ENCODE measurements at regions of chr2 and their contacts with region 1.

Region 1: DNA sequence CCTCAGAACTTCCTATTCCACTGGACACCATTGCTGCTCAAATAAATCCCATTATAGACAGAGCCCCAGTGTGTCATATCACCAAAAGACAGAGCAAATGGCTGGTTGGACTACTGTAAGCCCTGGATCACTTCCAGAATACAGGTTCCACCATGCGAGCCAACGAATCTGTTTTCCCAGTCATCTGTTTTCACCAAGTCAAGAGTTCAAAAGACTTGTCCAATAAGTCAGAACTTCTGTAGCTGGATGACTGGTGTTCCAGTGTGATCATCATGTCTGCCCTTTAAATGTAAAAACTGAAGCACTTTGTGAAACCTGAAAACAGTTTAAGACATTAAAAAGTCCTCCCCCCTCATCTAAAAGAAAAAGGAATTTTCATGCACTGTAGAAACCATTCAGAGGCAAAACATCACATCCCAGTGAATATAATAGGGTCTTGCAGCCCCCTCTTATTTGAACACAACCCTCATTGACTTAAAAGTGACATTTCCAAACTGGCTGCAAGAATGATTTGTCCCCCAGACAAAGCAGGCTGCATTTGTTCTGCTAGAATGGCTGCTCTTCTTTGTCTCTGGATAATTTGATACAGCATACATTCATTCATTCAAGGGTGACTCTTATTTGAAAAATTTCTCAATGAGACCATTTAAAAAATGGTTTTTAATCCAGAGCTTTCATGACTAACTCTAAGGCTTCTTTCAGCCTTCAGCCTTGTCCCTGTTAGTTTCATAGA is 64.6 kb upstream of the TANC1 start:
- DNase-seq: no peak
- ATAC-seq: no peak
- H3K4me3 ChIP-seq: no peak overlapping the region
- H3K4me3 Mint-ChIP-seq: no peak overlapping the region
- H3K27ac ChIP-seq: no peak overlapping the region
- H3K27ac Mint-ChIP-seq: no peak overlapping the region
- H3K4me1 ChIP-seq: no peaks in the 10 kb centered on the region
- H3K4me1 Mint-ChIP-seq: no peaks in the 10 kb centered on the region
- H3K27me3 ChIP-seq: no peaks in the 10 kb centered on the region
- H3K27me3 Mint-ChIP-seq: no peaks in the 10 kb centered on the region
- CTCF ChIP-seq: no peak

Region 2: GRCh38 chr2:158773121-158773520 is 130.8 kb before region 1 on chr2:
- CTCF ChIA-PET with region 1: no interaction called
- POLR2A ChIA-PET with region 1: no interaction called
- intact Hi-C with region 1: no loop called
- DNase-seq: no peak
- ATAC-seq: no peak
- H3K4me3 ChIP-seq: no peak overlapping the region
- H3K4me3 Mint-ChIP-seq: no peak overlapping the region
- H3K27ac ChIP-seq: no peak overlapping the region
- H3K27ac Mint-ChIP-seq: no peak overlapping the region
- H3K4me1 ChIP-seq: no peaks in the 10 kb centered on the region
- H3K4me1 Mint-ChIP-seq: no peaks in the 10 kb centered on the region
- H3K27me3 ChIP-seq: no peaks in the 10 kb centered on the region
- H3K27me3 Mint-ChIP-seq: no peaks in the 10 kb centered on the region
- CTCF ChIP-seq: no peak

Region 3: GRCh38 chr2:158923180-158923594 is 19.3 kb after region 1 on chr2:
- CTCF ChIA-PET with region 1: no interaction called
- POLR2A ChIA-PET with region 1: no interaction called
- intact Hi-C with region 1: no loop called
- DNase-seq: no peak
- ATAC-seq: no peak
- H3K4me3 ChIP-seq: no peak overlapping the region
- H3K4me3 Mint-ChIP-seq: no peak overlapping the region
- H3K27ac ChIP-seq: no peak overlapping the region
- H3K27ac Mint-ChIP-seq: no peak overlapping the region
- H3K4me1 ChIP-seq: no peaks in the 10 kb centered on the region
- H3K4me1 Mint-ChIP-seq: no peaks in the 10 kb centered on the region
- H3K27me3 ChIP-seq: no peaks in the 10 kb centered on the region
- H3K27me3 Mint-ChIP-seq: peaks cover 6% of the 10 kb centered on the region
- CTCF ChIP-seq: no peak

Region 4: GRCh38 chr2:159118115-159118858 is 214.4 kb after region 1 on chr2:
- CTCF ChIA-PET with region 1: interaction called, 6 read pairs
- POLR2A ChIA-PET with region 1: interaction called, 3 read pairs
- intact Hi-C with region 1: loop called (anchors 1 kb)
- DNase-seq: peak; percentile 61 to 87 (median 72)
- ATAC-seq: peak; percentile 91
- H3K4me3 ChIP-seq: no peak overlapping the region
- H3K4me3 Mint-ChIP-seq: no peak overlapping the region
- H3K27ac ChIP-seq: no peak overlapping the region
- H3K27ac Mint-ChIP-seq: no peak overlapping the region
- H3K4me1 ChIP-seq: peaks cover 8% of the 10 kb centered on the region
- H3K4me1 Mint-ChIP-seq: peaks cover 8% of the 10 kb centered on the region
- H3K27me3 ChIP-seq: peaks cover 0 to 3% of the 10 kb centered on the region in 2 experiments
- H3K27me3 Mint-ChIP-seq: no peaks in the 10 kb centered on the region
- CTCF ChIP-seq: peak; percentile 95

Region 5: DNA sequence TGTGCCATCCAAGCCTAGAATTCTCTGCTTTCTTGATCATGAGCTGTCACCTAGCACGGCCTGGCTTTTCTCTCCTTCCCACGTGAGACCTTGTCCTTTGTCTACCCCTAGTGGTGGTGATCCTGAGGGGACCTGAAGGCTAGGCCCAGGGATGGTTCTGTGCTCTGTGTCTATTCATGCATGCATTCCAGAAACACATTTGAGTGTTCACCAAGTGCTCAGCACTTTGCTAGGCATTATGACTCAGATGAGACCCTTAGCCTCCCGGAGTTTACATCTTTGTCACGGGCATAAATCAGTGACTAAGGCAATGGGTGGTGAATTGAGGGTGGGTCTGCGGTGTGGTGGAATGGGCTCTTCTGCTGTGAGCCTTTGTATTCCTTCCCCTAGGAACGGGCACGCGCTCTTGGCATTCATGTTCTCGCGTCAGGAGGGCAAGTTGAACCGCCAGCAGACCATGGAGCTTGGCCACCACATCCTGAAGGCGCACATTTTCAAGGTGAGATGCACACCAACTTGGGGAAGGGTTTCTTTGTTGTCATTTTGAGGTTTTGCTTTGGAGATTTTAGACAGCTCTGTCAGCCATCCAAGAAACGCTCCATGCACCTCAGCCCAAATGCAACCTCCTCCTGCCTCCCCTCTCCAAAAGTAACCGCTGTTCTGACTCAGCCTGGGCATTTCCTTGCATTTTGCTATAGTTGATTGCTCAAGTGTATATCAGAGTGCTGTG is 281.7 kb after region 1 on chr2:
- CTCF ChIA-PET with region 1: interaction called, 3 read pairs
- POLR2A ChIA-PET with region 1: no interaction called
- intact Hi-C with region 1: loop called in 1 of 2 experiments (anchors 5 kb)
- DNase-seq: peak in 4 of 14 experiments; percentile 35 to 43 (median 36)
- ATAC-seq: no peak
- H3K4me3 ChIP-seq: no peak overlapping the region
- H3K4me3 Mint-ChIP-seq: no peak overlapping the region
- H3K27ac ChIP-seq: no peak overlapping the region
- H3K27ac Mint-ChIP-seq: no peak overlapping the region
- H3K4me1 ChIP-seq: peaks cover 3% of the 10 kb centered on the region
- H3K4me1 Mint-ChIP-seq: peaks cover 4% of the 10 kb centered on the region
- H3K27me3 ChIP-seq: no peaks in the 10 kb centered on the region
- H3K27me3 Mint-ChIP-seq: no peaks in the 10 kb centered on the region
- CTCF ChIP-seq: no peak

Region 6: GRCh38 chr2:159600752-159601151 is 696.9 kb after region 1 on chr2:
- CTCF ChIA-PET with region 1: no interaction called
- POLR2A ChIA-PET with region 1: no interaction called
- intact Hi-C with region 1: no loop called
- DNase-seq: no peak
- ATAC-seq: no peak
- H3K4me3 ChIP-seq: no peak overlapping the region
- H3K4me3 Mint-ChIP-seq: no peak overlapping the region
- H3K27ac ChIP-seq: no peak overlapping the region
- H3K27ac Mint-ChIP-seq: no peak overlapping the region
- H3K4me1 ChIP-seq: no peaks in the 10 kb centered on the region
- H3K4me1 Mint-ChIP-seq: no peaks in the 10 kb centered on the region
- H3K27me3 ChIP-seq: no peaks in the 10 kb centered on the region
- H3K27me3 Mint-ChIP-seq: no peaks in the 10 kb centered on the region
- CTCF ChIP-seq: no peak

Region 7: GRCh38 chr2:159807183-159808031 is 903.5 kb after region 1 on chr2:
- CTCF ChIA-PET with region 1: no interaction called
- POLR2A ChIA-PET with region 1: no interaction called
- intact Hi-C with region 1: loop called in 1 of 2 experiments (anchors 5 kb)
- DNase-seq: peak in 4 of 14 experiments; percentile 6 to 46 (median 34)
- ATAC-seq: no peak
- H3K4me3 ChIP-seq: no peak overlapping the region
- H3K4me3 Mint-ChIP-seq: no peak overlapping the region
- H3K27ac ChIP-seq: no peak overlapping the region
- H3K27ac Mint-ChIP-seq: no peak overlapping the region
- H3K4me1 ChIP-seq: no peaks in the 10 kb centered on the region
- H3K4me1 Mint-ChIP-seq: no peaks in the 10 kb centered on the region
- H3K27me3 ChIP-seq: no peaks in the 10 kb centered on the region
- H3K27me3 Mint-ChIP-seq: no peaks in the 10 kb centered on the region
- CTCF ChIP-seq: peak; percentile 54

Region 8: GRCh38 chr2:159921752-159922404 is 1018.0 kb after region 1 on chr2:
- CTCF ChIA-PET with region 1: no interaction called
- POLR2A ChIA-PET with region 1: no interaction called
- intact Hi-C with region 1: loop called in 1 of 2 experiments (anchors 5 kb)
- DNase-seq: peak; percentile 47 to 80 (median 67)
- ATAC-seq: peak; percentile 83
- H3K4me3 ChIP-seq: no peak overlapping the region
- H3K4me3 Mint-ChIP-seq: no peak overlapping the region
- H3K27ac ChIP-seq: no peak overlapping the region
- H3K27ac Mint-ChIP-seq: no peak overlapping the region
- H3K4me1 ChIP-seq: peaks cover 5% of the 10 kb centered on the region
- H3K4me1 Mint-ChIP-seq: no peaks in the 10 kb centered on the region
- H3K27me3 ChIP-seq: peaks cover 0 to 5% of the 10 kb centered on the region in 2 experiments
- H3K27me3 Mint-ChIP-seq: peaks cover 21% of the 10 kb centered on the region
- CTCF ChIP-seq: peak; percentile 77

Region 9: DNA sequence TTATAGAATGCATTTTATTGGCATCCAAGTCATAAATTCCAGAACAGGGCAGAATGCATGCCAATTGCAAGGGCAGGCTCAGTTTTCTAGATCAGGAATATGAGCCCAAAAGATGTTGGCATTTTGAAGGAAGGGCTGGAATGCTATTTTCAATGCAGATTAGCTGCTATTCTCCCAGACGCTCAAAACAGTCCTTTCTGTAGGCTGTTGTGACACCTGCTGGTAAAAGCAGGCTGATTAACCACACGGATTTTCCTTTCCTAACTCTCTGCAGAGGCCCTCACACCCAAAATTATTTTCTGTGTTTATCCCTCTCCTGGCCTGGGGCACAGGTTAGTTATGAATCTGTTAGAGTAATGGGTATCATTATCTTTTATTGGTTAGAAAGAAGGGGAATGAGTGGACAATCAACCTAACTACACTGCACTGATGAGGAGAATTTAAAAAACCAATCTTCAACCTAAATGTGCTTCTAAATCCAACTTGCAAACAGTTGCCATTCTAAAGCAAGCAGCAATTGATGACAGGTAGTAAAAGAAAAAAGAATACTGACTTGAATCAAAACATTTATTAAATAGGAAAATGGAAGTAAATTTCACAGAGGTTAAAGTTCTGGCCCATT is 1064.5 kb after region 1 on chr2:
- CTCF ChIA-PET with region 1: no interaction called
- POLR2A ChIA-PET with region 1: no interaction called
- intact Hi-C with region 1: loop called in 1 of 2 experiments (anchors 5 kb)
- DNase-seq: peak in 5 of 14 experiments; percentile 4 to 34 (median 13)
- ATAC-seq: no peak
- H3K4me3 ChIP-seq: no peak overlapping the region
- H3K4me3 Mint-ChIP-seq: no peak overlapping the region
- H3K27ac ChIP-seq: no peak overlapping the region
- H3K27ac Mint-ChIP-seq: no peak overlapping the region
- H3K4me1 ChIP-seq: no peaks in the 10 kb centered on the region
- H3K4me1 Mint-ChIP-seq: no peaks in the 10 kb centered on the region
- H3K27me3 ChIP-seq: no peaks in the 10 kb centered on the region
- H3K27me3 Mint-ChIP-seq: no peaks in the 10 kb centered on the region
- CTCF ChIP-seq: peak; percentile 28

Region 10: GRCh38 chr2:160210599-160211138 is 1306.8 kb after region 1 on chr2:
- CTCF ChIA-PET with region 1: no interaction called
- POLR2A ChIA-PET with region 1: interaction called, 3 read pairs
- intact Hi-C with region 1: loop called (anchors 2 to 5 kb)
- DNase-seq: peak; percentile 50 to 81 (median 61)
- ATAC-seq: peak; percentile 90
- H3K4me3 ChIP-seq: no peak overlapping the region
- H3K4me3 Mint-ChIP-seq: no peak overlapping the region
- H3K27ac ChIP-seq: no peak overlapping the region
- H3K27ac Mint-ChIP-seq: no peak overlapping the region
- H3K4me1 ChIP-seq: no peaks in the 10 kb centered on the region
- H3K4me1 Mint-ChIP-seq: peaks cover 6% of the 10 kb centered on the region
- H3K27me3 ChIP-seq: no peaks in the 10 kb centered on the region
- H3K27me3 Mint-ChIP-seq: no peaks in the 10 kb centered on the region
- CTCF ChIP-seq: peak; percentile 84

Measured in CD4-positive, alpha-beta T cell (primary cell).